Right ventricle myocardium inferior (tissue), 1 donor: ENCODE measurements at regions of chr7 and their contacts with region 1.

Region 1: GRCh38 chr7:155524018-155524616 is 22.2 kb downstream of the CNPY1 start:
- DNase-seq: no peak
- ATAC-seq: no peak

Region 2: DNA sequence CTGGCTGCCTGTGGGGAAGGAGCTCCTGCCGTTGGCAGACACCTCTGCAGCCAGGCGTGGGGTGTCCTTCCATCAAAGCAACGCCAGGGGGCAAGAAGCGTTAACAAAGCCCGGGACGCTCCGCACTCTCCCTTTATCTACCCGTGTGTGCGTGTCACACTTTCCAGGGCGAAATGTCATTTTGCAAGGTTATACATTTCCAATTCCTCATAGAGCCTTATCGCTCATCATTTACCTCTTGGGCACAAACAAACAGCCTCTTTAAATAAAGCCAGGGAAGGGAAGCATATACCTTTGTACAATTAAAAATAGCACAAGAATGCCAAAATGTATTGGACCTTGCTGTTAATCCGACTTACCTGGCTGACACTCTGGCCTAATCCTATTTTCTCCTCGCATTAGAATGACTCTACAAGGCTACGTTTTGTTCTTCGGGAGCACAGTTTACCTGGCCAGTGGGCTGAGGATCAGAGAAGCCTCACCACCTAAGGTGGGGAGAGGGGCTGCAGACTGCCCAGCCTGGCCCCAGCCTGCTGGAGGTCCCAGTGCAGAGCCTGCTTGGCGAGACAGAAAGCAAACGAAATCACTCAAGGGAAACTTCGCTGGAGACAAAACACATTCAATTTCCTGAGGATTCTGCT is 143.8 kb before region 1 on chr7:
- intact Hi-C with region 1: loop called (anchors 10 kb)
- DNase-seq: peak; percentile 79
- ATAC-seq: peak; percentile 75